ENCODE measurements at regions of chr15 and their contacts with region 1.

Region 1: GRCh38 chr15:66603301-66604179 is 37.7 kb upstream of the LCTL start:
- DNase-seq: peak in 2 of 3 donors; percentile 80 to 81
- ATAC-seq: peak; percentile 88
- H3K4me3 ChIP-seq: no peak overlapping the region
- H3K4me1 ChIP-seq: no peaks in the 10 kb centered on the region
- CTCF ChIP-seq: peak; percentile 64

Region 2: GRCh38 chr15:66851226-66852071 is 247.9 kb after region 1 on chr15:
- intact Hi-C with region 1: loop called in 1 of 2 experiments (anchors 5 kb)
- DNase-seq: peak; percentile 89 to 92 (median 90)
- ATAC-seq: peak; percentile 97
- H3K4me3 ChIP-seq: no peak overlapping the region
- H3K4me1 ChIP-seq: peaks cover 13% of the 10 kb centered on the region
- CTCF ChIP-seq: peak; percentile 97

Region 3: GRCh38 chr15:66862878-66863335 is 259.4 kb after region 1 on chr15:
- intact Hi-C with region 1: loop called in 1 of 2 experiments (anchors 10 kb)
- DNase-seq: peak; percentile 75 to 88 (median 88)
- ATAC-seq: peak; percentile 97
- H3K4me3 ChIP-seq: no peak overlapping the region
- H3K4me1 ChIP-seq: no peaks in the 10 kb centered on the region
- CTCF ChIP-seq: peak; percentile 90